ENCODE measurements at regions of chr12 and their contacts with region 1.

Region 1: DNA sequence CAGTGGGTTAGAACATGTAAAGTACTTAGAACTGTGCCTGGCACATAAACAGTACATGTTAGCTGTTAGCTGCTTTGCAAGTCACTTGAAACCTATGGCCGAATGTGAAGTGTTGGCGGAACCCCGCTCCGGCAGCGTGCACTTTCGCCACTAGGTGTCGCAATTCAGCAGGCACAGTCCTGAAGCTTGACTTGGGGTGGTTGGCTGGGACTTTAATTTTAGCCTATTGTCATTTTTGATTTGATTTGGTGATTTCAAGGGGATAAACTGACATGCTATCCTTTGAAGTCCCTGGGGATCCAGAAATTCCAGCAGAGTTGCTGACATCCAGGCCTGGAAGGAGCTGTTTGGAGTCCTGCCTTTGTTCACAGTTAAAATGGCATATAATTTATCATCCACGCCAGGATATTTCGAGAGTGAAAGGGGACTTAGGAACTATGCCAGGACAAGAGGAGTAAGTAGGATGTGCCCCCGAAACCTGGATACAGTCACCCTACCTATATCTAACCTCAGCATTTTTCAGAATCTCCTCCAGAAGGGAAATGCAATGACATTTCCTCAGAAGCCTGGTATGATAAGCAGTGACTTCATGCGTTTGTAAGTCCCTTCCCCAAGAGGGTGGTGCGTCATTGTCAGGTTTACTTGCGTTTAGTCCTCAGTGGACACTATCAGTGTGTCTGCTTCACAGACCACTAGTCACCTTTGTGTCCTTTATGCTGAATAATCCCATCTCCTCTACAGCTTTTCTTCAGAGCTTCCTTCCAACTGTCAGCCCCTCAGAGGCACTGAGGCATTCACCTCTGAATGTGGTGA is 3.5 kb upstream of the TSPAN9 start:
- DNase-seq: peak; percentile 88
- CTCF ChIP-seq: peak; percentile 99

Region 2: GRCh38 chr12:3060778-3061458 is 12.7 kb before region 1 on chr12:
- CTCF ChIA-PET with region 1: interaction called, 26 read pairs
- POLR2A ChIA-PET with region 1: no interaction called
- DNase-seq: no peak
- CTCF ChIP-seq: no peak

Region 3: DNA sequence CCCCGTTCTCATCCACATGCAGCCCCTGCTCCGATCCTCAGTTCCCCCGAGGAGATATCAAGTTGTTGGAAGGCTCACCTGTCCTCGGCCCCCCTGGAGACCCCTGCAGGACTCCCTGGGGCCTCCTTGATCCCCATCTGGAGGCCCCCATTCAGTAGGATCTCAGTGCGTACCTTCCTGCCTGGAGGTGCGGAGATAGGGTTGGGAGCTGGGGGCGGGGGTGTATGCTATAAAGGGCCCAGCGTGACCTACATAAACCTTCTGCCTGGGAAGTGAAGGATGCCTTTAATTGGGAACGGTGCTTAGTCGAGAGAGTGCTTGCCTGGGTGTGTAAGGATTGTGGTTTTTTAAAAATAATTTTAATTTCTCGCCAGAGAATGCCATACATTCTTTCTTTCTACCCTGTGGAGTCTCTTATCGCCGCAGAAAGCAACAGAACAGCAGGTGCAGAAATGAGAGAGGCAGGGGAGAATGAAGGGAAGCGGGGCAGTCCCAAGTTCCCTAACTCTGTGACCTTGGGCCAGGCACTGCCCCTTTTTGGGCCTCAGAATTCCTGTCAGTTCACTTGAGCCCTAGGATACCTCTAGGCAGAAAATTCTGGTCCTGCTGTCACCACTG is 157.2 kb after region 1 on chr12:
- CTCF ChIA-PET with region 1: no interaction called
- POLR2A ChIA-PET with region 1: no interaction called
- DNase-seq: no peak
- CTCF ChIP-seq: no peak